ENCODE measurements at regions of chr9 and their contacts with region 1.

Region 1: GRCh38 chr9:124635285-124635684 is 128.1 kb upstream of the NR5A1 start:
- DNase-seq: no peak
- H3K4me3 ChIP-seq: no peak overlapping the region
- H3K27ac ChIP-seq: no peak overlapping the region
- H3K4me1 ChIP-seq: peaks cover 0 to 3% (median 0%) of the 10 kb centered on the region in 4 experiments; a peak in 2 of 7 replicates
- H3K27me3 ChIP-seq: no peaks in the 10 kb centered on the region
- CTCF ChIP-seq: no peak
- EP300 ChIP-seq: no peak
- POLR2A ChIP-seq: no peak
- RAD21 ChIP-seq: no peak

Region 2: GRCh38 chr9:124562328-124562727 is 73.0 kb before region 1 on chr9:
- CTCF ChIA-PET with region 1: no interaction called
- POLR2A ChIA-PET with region 1: no interaction called
- DNase-seq: no peak
- H3K4me3 ChIP-seq: no peak overlapping the region
- H3K27ac ChIP-seq: no peak overlapping the region
- H3K4me1 ChIP-seq: peaks cover 0 to 4% (median 1%) of the 10 kb centered on the region in 4 experiments; a peak in 4 of 7 replicates
- H3K27me3 ChIP-seq: no peaks in the 10 kb centered on the region
- CTCF ChIP-seq: no peak
- EP300 ChIP-seq: no peak
- POLR2A ChIP-seq: no peak
- RAD21 ChIP-seq: no peak

Region 3: DNA sequence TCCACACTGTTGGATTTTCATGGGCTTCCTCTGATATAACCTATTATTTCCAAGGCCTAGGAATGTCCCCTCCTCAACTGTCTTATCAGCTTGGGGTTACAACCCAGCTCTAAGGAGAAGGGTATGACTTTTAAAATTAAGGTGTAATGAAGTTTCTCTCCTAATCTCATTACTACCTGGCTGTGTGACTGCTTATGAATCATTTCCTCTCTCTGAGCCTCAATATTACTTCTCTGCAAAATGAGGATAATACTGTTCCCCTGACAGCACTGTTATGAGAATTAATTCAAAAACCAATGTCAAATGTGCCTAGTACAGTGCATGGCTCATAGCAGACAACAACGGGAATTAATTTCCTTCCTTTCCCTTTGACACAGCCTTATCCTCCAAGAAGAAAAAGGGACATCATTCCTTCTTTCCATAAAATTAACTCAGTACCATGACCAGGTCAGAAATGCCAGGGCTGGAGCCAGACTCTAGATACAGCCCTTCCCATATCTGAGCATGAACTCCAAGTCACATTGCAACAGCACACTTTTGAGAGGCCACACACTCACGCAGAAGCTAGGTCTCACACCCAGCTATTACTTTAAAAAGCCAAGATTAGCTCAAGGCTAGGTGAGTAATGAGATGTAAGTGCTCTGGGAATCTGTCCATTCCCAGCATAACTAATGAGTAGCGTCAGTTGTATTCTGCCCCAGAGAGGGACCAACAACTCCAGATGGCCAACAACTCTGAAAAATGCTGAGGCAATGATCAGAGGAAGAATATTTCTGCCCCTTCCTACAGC is 17.1 kb after region 1 on chr9:
- CTCF ChIA-PET with region 1: interaction called, 22 read pairs
- POLR2A ChIA-PET with region 1: interaction called, 4 read pairs
- DNase-seq: no peak
- H3K4me3 ChIP-seq: no peak overlapping the region
- H3K27ac ChIP-seq: no peak overlapping the region
- H3K4me1 ChIP-seq: no peaks in the 10 kb centered on the region
- H3K27me3 ChIP-seq: no peaks in the 10 kb centered on the region
- CTCF ChIP-seq: no peak
- EP300 ChIP-seq: no peak
- POLR2A ChIP-seq: no peak
- RAD21 ChIP-seq: no peak

Region 4: GRCh38 chr9:124685217-124685616 is 49.9 kb after region 1 on chr9:
- CTCF ChIA-PET with region 1: no interaction called
- POLR2A ChIA-PET with region 1: no interaction called
- DNase-seq: no peak
- H3K4me3 ChIP-seq: no peak overlapping the region
- H3K27ac ChIP-seq: no peak overlapping the region
- H3K4me1 ChIP-seq: no peaks in the 10 kb centered on the region
- H3K27me3 ChIP-seq: no peaks in the 10 kb centered on the region
- CTCF ChIP-seq: no peak
- EP300 ChIP-seq: no peak
- POLR2A ChIP-seq: no peak
- RAD21 ChIP-seq: no peak

Measured in H1 (cell line).